CD8-positive, alpha-beta memory T cell (primary cell): ENCODE measurements at regions of chr13 and their contacts with region 1.

Region 1: DNA sequence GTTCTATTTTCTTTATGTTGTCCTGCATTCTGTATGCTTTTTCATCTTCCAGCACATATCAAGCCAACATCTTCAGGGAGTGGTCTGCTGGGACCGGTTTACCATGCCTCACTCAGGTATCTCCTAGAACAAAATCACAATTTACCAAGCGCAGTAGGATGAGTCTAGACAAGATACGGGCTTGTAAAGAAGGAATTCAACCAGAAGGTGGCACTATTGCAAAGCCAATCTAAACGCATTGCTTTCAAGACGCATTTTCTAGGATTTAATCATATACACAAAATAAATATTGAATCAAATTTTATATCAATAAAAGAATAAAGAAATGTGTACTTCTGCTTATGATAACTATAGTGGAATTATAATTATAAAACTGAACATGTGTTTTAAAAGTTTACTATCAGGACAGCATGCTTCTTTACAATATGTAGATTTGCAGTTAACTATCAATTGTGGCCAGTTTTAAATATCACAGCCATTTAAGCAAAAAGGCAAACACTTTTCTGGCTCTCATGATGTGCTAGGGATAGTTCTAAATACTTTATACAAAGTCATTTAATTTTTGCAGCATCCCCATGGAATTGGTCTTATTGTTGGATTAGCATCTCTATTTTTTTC is 16.1 kb upstream of the TPP2 start:
- DNase-seq: peak in 2 of 5 donors; percentile 44 to 54
- H3K4me3 ChIP-seq: no peak overlapping the region
- H3K4me3 Mint-ChIP-seq: no peak overlapping the region
- H3K27ac ChIP-seq: no peak overlapping the region
- H3K27ac Mint-ChIP-seq: peak overlapping the region in 1 of 8 donors; percentile 32
- H3K4me1 ChIP-seq: peaks cover 8% of the 10 kb centered on the region
- H3K4me1 Mint-ChIP-seq: peaks cover 13 to 17% (median 16%) of the 10 kb centered on the region in 3 donors
- H3K27me3 ChIP-seq: no peaks in the 10 kb centered on the region
- H3K27me3 Mint-ChIP-seq: peaks cover 13 to 19% of the 10 kb centered on the region in 2 donors

Region 2: DNA sequence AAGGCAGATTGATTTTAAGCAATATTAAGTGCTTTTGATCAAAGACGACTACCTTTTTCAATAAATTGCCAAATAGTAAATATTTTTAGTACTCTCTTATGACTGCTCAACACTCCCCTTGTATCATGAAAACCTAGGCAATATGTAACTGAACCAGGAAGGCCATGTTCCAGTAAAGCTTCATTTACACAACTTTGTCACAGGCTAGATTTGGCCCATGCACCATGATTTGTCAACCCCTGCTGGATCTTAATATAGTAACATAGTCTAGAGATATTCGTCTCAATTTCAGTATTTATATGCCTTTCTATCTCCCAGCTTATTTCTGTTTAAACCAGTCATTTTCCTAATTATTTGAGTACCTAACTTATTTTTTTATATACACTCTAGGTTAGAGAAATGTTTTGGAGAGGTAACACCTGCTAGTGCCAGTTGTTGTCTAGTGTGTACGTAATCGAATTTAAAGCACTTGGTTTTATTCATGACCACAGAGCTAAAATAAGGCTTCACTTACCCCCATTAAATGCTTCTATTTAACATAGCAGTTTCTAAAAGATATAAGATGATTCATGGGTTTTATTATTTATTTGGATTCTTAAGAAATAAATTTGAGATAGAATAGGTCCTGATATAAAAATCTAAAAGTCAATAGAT is 37.2 kb after region 1 on chr13:
- CTCF ChIA-PET with region 1: no interaction called
- POLR2A ChIA-PET with region 1: no interaction called
- DNase-seq: no peak
- H3K4me3 ChIP-seq: no peak overlapping the region
- H3K4me3 Mint-ChIP-seq: no peak overlapping the region
- H3K27ac ChIP-seq: no peak overlapping the region
- H3K27ac Mint-ChIP-seq: peak overlapping the region in 2 of 8 donors; percentile 9 to 10
- H3K4me1 ChIP-seq: no peaks in the 10 kb centered on the region
- H3K4me1 Mint-ChIP-seq: peaks cover 23 to 38% (median 27%) of the 10 kb centered on the region in 3 donors
- H3K27me3 ChIP-seq: no peaks in the 10 kb centered on the region
- H3K27me3 Mint-ChIP-seq: no peaks in the 10 kb centered on the region

Region 3: GRCh38 chr13:102724923-102725322 is 144.3 kb after region 1 on chr13:
- CTCF ChIA-PET with region 1: interaction called, 11 read pairs
- POLR2A ChIA-PET with region 1: no interaction called
- DNase-seq: no peak
- H3K4me3 ChIP-seq: no peak overlapping the region
- H3K4me3 Mint-ChIP-seq: no peak overlapping the region
- H3K27ac ChIP-seq: no peak overlapping the region
- H3K27ac Mint-ChIP-seq: no peak overlapping the region
- H3K4me1 ChIP-seq: no peaks in the 10 kb centered on the region
- H3K4me1 Mint-ChIP-seq: peaks cover 4 to 11% (median 9%) of the 10 kb centered on the region in 3 donors
- H3K27me3 ChIP-seq: peaks cover 3% of the 10 kb centered on the region
- H3K27me3 Mint-ChIP-seq: peaks cover 6 to 9% of the 10 kb centered on the region in 2 donors